WTC11 (cell line): ENCODE measurements at regions of chr12 and their contacts with region 1.

Region 1: GRCh38 chr12:132153501-132154340 is 9.5 kb downstream of the NOC4L start:
- DNase-seq: peak; percentile 88
- ATAC-seq: peak; percentile 98
- H3K4me3 Mint-ChIP-seq: no peak overlapping the region
- H3K27ac Mint-ChIP-seq: no peak overlapping the region
- H3K4me1 Mint-ChIP-seq: no peaks in the 10 kb centered on the region
- H3K27me3 Mint-ChIP-seq: no peaks in the 10 kb centered on the region
- CTCF ChIP-seq: peak; percentile 83

Region 2: DNA sequence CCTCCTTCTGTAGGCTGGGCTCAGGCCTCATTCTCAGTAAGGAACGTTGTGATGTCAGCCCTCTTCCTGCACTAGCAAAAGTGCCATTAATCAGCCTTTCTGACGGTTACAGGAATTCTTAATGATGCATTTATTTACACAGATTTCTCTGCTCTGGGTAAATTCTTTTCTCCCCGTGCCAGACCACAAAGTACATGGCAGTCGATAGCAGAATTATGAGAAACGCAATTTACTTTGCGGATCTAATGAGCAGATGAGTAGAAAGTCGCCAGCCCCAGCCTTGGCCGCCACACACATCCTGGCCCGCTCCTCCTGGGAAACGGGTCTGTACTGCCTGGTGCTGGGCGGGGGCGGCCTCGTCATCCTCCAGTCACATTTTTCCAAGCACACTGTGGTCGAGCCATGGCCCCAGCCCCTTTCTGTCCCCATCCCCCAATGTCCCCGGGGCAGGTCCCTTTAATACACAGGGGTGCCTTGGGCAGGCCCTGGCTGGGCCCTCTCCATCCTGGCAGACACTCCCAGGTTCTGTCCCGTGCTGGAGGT is 16.4 kb after region 1 on chr12:
- CTCF ChIA-PET with region 1: interaction called, 10 read pairs
- POLR2A ChIA-PET with region 1: no interaction called
- DNase-seq: no peak
- ATAC-seq: no peak
- H3K4me3 Mint-ChIP-seq: no peak overlapping the region
- H3K27ac Mint-ChIP-seq: no peak overlapping the region
- H3K4me1 Mint-ChIP-seq: no peaks in the 10 kb centered on the region
- H3K27me3 Mint-ChIP-seq: peaks cover 23% of the 10 kb centered on the region
- CTCF ChIP-seq: no peak

Region 3: GRCh38 chr12:132194056-132194455 is 40.3 kb after region 1 on chr12:
- CTCF ChIA-PET with region 1: interaction called, 22 read pairs
- POLR2A ChIA-PET with region 1: no interaction called
- DNase-seq: peak; percentile 61
- ATAC-seq: no peak
- H3K4me3 Mint-ChIP-seq: no peak overlapping the region
- H3K27ac Mint-ChIP-seq: no peak overlapping the region
- H3K4me1 Mint-ChIP-seq: peaks cover 3% of the 10 kb centered on the region
- H3K27me3 Mint-ChIP-seq: peaks cover 57% of the 10 kb centered on the region
- CTCF ChIP-seq: peak; percentile 79

Region 4: GRCh38 chr12:132210223-132211055 is 56.7 kb after region 1 on chr12:
- CTCF ChIA-PET with region 1: interaction called, 28 read pairs
- POLR2A ChIA-PET with region 1: no interaction called
- DNase-seq: peak; percentile 70
- ATAC-seq: peak; percentile 62
- H3K4me3 Mint-ChIP-seq: no peak overlapping the region
- H3K27ac Mint-ChIP-seq: no peak overlapping the region; the same call in 1 of the 2 replicates
- H3K4me1 Mint-ChIP-seq: no peaks in the 10 kb centered on the region
- H3K27me3 Mint-ChIP-seq: peaks cover 65% of the 10 kb centered on the region
- CTCF ChIP-seq: no peak

Region 5: GRCh38 chr12:132275110-132275531 is 121.4 kb after region 1 on chr12:
- CTCF ChIA-PET with region 1: interaction called, 11 read pairs
- POLR2A ChIA-PET with region 1: no interaction called
- DNase-seq: peak; percentile 66
- ATAC-seq: peak; percentile 91
- H3K4me3 Mint-ChIP-seq: peak overlapping the region; percentile 32; the same call in 1 of the 2 replicates
- H3K27ac Mint-ChIP-seq: peak overlapping the region; percentile 81; the same call in 1 of the 2 replicates
- H3K4me1 Mint-ChIP-seq: peaks cover 26% of the 10 kb centered on the region
- H3K27me3 Mint-ChIP-seq: peaks cover 12% of the 10 kb centered on the region
- CTCF ChIP-seq: no peak

Region 6: GRCh38 chr12:132285991-132286681 is 132.4 kb after region 1 on chr12:
- CTCF ChIA-PET with region 1: interaction called, 10 read pairs
- POLR2A ChIA-PET with region 1: no interaction called
- DNase-seq: no peak
- ATAC-seq: peak; percentile 64
- H3K4me3 Mint-ChIP-seq: peak overlapping the region; percentile 62
- H3K27ac Mint-ChIP-seq: no peak overlapping the region
- H3K4me1 Mint-ChIP-seq: peaks cover 21% of the 10 kb centered on the region
- H3K27me3 Mint-ChIP-seq: peaks cover 45% of the 10 kb centered on the region
- CTCF ChIP-seq: no peak